HepG2 (cell line): ENCODE measurements at regions of chr6 and their contacts with region 1.

Region 1: DNA sequence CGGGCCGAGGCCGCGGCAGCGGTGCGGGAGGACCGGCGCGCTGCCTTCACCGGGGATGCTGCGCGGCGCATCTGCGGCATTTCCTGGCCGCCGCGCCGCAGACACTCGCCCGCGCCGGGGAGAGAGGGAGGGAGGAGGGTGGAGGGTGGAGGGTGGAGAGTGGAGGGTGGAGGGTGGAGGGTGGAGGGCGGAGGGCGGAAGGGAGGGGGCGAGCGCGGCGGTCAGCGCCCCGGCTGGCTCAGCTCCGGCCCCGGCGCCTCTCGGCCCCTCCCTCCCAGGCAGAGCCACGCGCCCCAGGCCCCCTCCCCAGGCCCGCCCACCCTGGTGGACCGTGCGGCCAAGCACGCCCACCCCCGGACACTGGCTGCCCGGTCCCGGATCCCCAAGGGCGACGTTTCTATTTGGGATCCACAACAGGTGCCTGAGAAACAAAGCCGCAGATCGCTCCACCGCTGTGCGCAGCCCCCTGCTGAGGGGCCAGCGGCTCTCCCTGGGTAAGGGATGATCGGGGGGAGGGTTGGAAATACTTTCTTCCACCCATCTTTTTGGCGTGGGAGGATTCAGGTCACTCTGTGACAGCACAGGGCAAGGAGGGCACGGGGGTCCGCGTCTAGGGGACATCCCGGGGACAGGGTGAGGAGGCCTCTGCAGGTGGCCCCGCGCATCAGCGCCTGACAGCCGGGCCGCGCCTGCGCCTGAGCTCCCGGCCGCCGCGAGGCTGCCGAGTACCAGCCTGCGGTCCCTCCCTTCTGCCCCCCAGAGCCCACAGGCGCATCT is 111.1 kb upstream of the BEND6 start:
- DNase-seq: peak; percentile 77
- ATAC-seq: peak; percentile 99
- H3K4me3 ChIP-seq: peak overlapping the region; percentile 57 to 80 (median 74)
- H3K27ac ChIP-seq: no peak overlapping the region
- H3K4me1 ChIP-seq: peaks cover 8% of the 10 kb centered on the region
- H3K27me3 ChIP-seq: peaks cover 3 to 7% of the 10 kb centered on the region in 2 experiments; a peak in 3 of 5 replicates
- CTCF ChIP-seq: peak; percentile 75
- EP300 ChIP-seq: no peak
- POLR2A ChIP-seq: 0 out of 4 replicates have a peak, but pooled peaks of 1 of the 2 experiments have one; percentile 33
- RAD21 ChIP-seq: peak; percentile 85

Region 2: GRCh38 chr6:56595490-56596122 is 248.2 kb before region 1 on chr6:
- CTCF ChIA-PET with region 1: no interaction called
- POLR2A ChIA-PET with region 1: no interaction called
- in situ Hi-C with region 1: no loop called
- intact Hi-C with region 1: no loop called
- DNase-seq: peak; percentile 43
- ATAC-seq: peak; percentile 89
- H3K4me3 ChIP-seq: no peak overlapping the region
- H3K27ac ChIP-seq: no peak overlapping the region
- H3K4me1 ChIP-seq: no peaks in the 10 kb centered on the region
- H3K27me3 ChIP-seq: no peaks in the 10 kb centered on the region
- CTCF ChIP-seq: peak; percentile 74
- EP300 ChIP-seq: no peak
- POLR2A ChIP-seq: no peak
- RAD21 ChIP-seq: no peak

Region 3: GRCh38 chr6:56624046-56624727 is 219.6 kb before region 1 on chr6:
- CTCF ChIA-PET with region 1: no interaction called
- POLR2A ChIA-PET with region 1: no interaction called
- in situ Hi-C with region 1: no loop called
- intact Hi-C with region 1: loop called (anchors 5 kb)
- DNase-seq: peak; percentile 89
- ATAC-seq: peak; percentile 100
- H3K4me3 ChIP-seq: peak overlapping the region in 2 of 3 experiments; percentile 23 to 30; a peak in 4 of 6 replicates
- H3K27ac ChIP-seq: peak overlapping the region; percentile 68
- H3K4me1 ChIP-seq: peaks cover 25% of the 10 kb centered on the region
- H3K27me3 ChIP-seq: no peaks in the 10 kb centered on the region
- CTCF ChIP-seq: no peak
- EP300 ChIP-seq: no peak
- POLR2A ChIP-seq: no peak
- RAD21 ChIP-seq: no peak

Region 4: DNA sequence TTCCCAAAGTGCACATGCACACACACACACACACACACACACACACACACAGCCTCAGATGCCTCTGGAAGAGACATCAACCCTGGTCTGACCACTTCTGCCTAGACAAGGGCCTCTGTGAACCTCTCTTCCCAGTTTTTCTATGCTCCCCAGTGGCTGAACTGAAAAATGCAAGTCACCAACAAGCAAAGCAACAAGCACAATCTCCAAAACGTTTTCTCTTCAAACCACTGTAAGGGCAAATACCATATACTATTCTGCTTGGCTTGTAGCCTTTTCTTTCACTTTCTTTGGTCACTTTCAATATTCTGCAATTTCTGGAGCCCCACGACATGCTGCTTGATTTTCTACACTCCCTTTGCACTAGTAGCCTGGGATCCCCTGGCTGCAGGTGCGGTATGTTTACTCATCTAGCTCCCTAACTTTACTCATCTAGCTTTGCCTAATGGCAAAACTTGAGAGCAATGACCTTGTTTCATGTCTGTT is 79.6 kb before region 1 on chr6:
- CTCF ChIA-PET with region 1: no interaction called
- POLR2A ChIA-PET with region 1: no interaction called
- in situ Hi-C with region 1: no loop called
- intact Hi-C with region 1: loop called (anchors 5 kb)
- DNase-seq: peak; percentile 69
- ATAC-seq: peak; percentile 99
- H3K4me3 ChIP-seq: no peak overlapping the region
- H3K27ac ChIP-seq: no peak overlapping the region
- H3K4me1 ChIP-seq: peaks cover 12% of the 10 kb centered on the region
- H3K27me3 ChIP-seq: no peaks in the 10 kb centered on the region
- CTCF ChIP-seq: peak; percentile 81
- EP300 ChIP-seq: no peak
- POLR2A ChIP-seq: no peak
- RAD21 ChIP-seq: peak; percentile 44; the same call in 1 of the 2 replicates

Region 5: DNA sequence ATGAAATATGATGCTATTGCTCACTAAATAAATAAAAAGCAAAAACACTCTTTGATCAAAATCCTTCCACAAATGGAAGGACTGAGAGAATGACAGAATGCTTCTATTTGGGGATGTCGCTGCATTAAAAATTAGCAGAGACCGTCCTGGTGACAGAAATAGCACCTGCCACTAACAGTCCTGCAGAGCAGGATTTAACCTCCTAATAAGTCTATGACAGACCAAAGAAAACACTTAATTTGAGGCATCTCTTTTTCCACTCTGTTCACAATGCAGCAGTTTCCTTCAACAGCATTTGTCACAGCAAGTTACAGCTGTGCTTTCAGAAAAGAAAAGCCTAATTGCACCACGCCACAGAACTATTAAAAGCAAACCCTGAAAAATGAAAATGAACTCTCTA is 29.5 kb before region 1 on chr6:
- CTCF ChIA-PET with region 1: no interaction called
- POLR2A ChIA-PET with region 1: no interaction called
- in situ Hi-C with region 1: no loop called
- intact Hi-C with region 1: no loop called
- DNase-seq: no peak
- ATAC-seq: no peak
- H3K4me3 ChIP-seq: no peak overlapping the region
- H3K27ac ChIP-seq: no peak overlapping the region
- H3K4me1 ChIP-seq: no peaks in the 10 kb centered on the region
- H3K27me3 ChIP-seq: no peaks in the 10 kb centered on the region; a peak in 1 of 5 replicates
- CTCF ChIP-seq: no peak
- EP300 ChIP-seq: no peak
- POLR2A ChIP-seq: no peak
- RAD21 ChIP-seq: no peak

Region 6: GRCh38 chr6:57288115-57288514 is 444.4 kb after region 1 on chr6:
- CTCF ChIA-PET with region 1: no interaction called
- POLR2A ChIA-PET with region 1: no interaction called
- in situ Hi-C with region 1: no loop called
- intact Hi-C with region 1: no loop called
- DNase-seq: no peak
- ATAC-seq: no peak
- H3K4me3 ChIP-seq: no peak overlapping the region
- H3K27ac ChIP-seq: no peak overlapping the region
- H3K4me1 ChIP-seq: no peaks in the 10 kb centered on the region
- H3K27me3 ChIP-seq: 0 out of 5 replicates have a peak, but pooled peaks cover 0 to 9% of the 10 kb centered on the region in 2 experiments
- CTCF ChIP-seq: no peak
- EP300 ChIP-seq: no peak
- POLR2A ChIP-seq: no peak
- RAD21 ChIP-seq: no peak